CD8-positive, alpha-beta T cell (primary cell): ENCODE measurements at regions of chr10 and their contacts with region 1.

Region 1: GRCh38 chr10:96586419-96587263 is at the start of gene TM9SF3:
- DNase-seq: peak; percentile 86 to 97 (median 94)
- ATAC-seq: peak; percentile 83
- H3K4me3 ChIP-seq: peak within 1 kb of the TSS; percentile 94
- H3K4me3 Mint-ChIP-seq: no peak within 1 kb of the TSS
- H3K27ac ChIP-seq: peak within 1 kb of the TSS; percentile 98 to 99
- H3K27ac Mint-ChIP-seq: peak within 1 kb of the TSS; percentile 86
- H3K4me1 ChIP-seq: peaks cover 51% of the 10 kb centered on the region
- H3K4me1 Mint-ChIP-seq: peaks cover 50% of the 10 kb centered on the region
- H3K27me3 ChIP-seq: no peaks in the 10 kb centered on the region
- H3K27me3 Mint-ChIP-seq: no peaks in the 10 kb centered on the region
- CTCF ChIP-seq: no peak
- total RNA-seq, gene TM9SF3: 105 to 106 TPM

Region 2: GRCh38 chr10:95907456-95908253 is 679.0 kb before region 1 on chr10 and contains the start of gene CC2D2B:
- CTCF ChIA-PET with region 1: no interaction called
- POLR2A ChIA-PET with region 1: no interaction called
- intact Hi-C with region 1: loop called in 1 of 2 experiments (anchors 10 kb)
- DNase-seq: peak; percentile 21 to 79 (median 59)
- ATAC-seq: peak; percentile 72
- H3K4me3 ChIP-seq: peak within 1 kb of the TSS; percentile 77 to 82
- H3K4me3 Mint-ChIP-seq: peak within 1 kb of the TSS; percentile 90
- H3K27ac ChIP-seq: peak within 1 kb of the TSS; percentile 61 to 67
- H3K27ac Mint-ChIP-seq: peak within 1 kb of the TSS; percentile 83
- H3K4me1 ChIP-seq: no peaks in the 10 kb centered on the region
- H3K4me1 Mint-ChIP-seq: peaks cover 18% of the 10 kb centered on the region
- H3K27me3 ChIP-seq: no peaks in the 10 kb centered on the region
- H3K27me3 Mint-ChIP-seq: no peaks in the 10 kb centered on the region
- CTCF ChIP-seq: no peak
- total RNA-seq, gene CC2D2B: not detected

Region 3: GRCh38 chr10:96129387-96130325 is 457.0 kb before region 1 on chr10 and contains the start of gene ZNF518A:
- CTCF ChIA-PET with region 1: no interaction called
- POLR2A ChIA-PET with region 1: interaction called, 6 read pairs
- intact Hi-C with region 1: loop called in 1 of 2 experiments (anchors 5 kb)
- DNase-seq: peak; percentile 80 to 97 (median 88)
- ATAC-seq: peak; percentile 82
- H3K4me3 ChIP-seq: peak within 1 kb of the TSS; percentile 92 to 93
- H3K4me3 Mint-ChIP-seq: peak within 1 kb of the TSS; percentile 96
- H3K27ac ChIP-seq: peak within 1 kb of the TSS; percentile 98 to 99
- H3K27ac Mint-ChIP-seq: peak within 1 kb of the TSS; percentile 99
- H3K4me1 ChIP-seq: peaks cover 19% of the 10 kb centered on the region
- H3K4me1 Mint-ChIP-seq: peaks cover 25% of the 10 kb centered on the region
- H3K27me3 ChIP-seq: peaks cover 2 to 7% of the 10 kb centered on the region in 2 experiments
- H3K27me3 Mint-ChIP-seq: peaks cover 37% of the 10 kb centered on the region
- CTCF ChIP-seq: no peak
- total RNA-seq, gene ZNF518A: 8.7 to 9.3 TPM

Region 4: DNA sequence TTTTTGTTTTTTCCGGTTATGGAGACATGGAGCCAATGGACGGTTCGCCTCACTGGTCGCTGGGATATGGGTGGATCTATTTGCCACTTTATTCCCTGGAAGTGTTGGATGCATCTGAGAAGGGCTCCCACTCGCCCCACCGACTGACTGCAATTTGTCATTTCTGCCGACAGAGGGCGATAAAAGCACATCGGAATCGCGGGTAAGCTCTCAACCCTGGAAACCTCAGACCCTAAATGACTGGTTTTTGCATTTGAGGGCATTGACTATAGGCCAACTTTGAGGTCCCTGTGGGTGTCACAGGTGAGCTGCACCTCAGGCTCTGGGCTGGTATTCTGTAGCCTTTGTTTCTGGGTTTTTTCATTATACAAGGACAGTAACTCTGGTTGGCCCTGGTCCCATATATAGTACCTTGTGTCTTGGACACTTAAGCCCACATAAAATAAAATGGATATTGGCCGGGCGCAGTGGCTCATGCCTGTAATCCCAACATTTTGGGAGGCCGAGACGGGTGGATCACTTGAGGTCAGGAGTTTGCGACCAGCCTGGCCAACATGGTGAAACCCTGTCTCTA is 216.0 kb before region 1 on chr10:
- CTCF ChIA-PET with region 1: no interaction called
- POLR2A ChIA-PET with region 1: no interaction called
- intact Hi-C with region 1: no loop called
- DNase-seq: peak; percentile 10 to 67 (median 50)
- ATAC-seq: peak; percentile 46
- H3K4me3 ChIP-seq: no peak overlapping the region
- H3K4me3 Mint-ChIP-seq: no peak overlapping the region
- H3K27ac ChIP-seq: no peak overlapping the region
- H3K27ac Mint-ChIP-seq: no peak overlapping the region
- H3K4me1 ChIP-seq: no peaks in the 10 kb centered on the region
- H3K4me1 Mint-ChIP-seq: peaks cover 11% of the 10 kb centered on the region
- H3K27me3 ChIP-seq: no peaks in the 10 kb centered on the region
- H3K27me3 Mint-ChIP-seq: no peaks in the 10 kb centered on the region
- CTCF ChIP-seq: peak; percentile 81

Region 5: GRCh38 chr10:96565774-96566173 is 20.9 kb before region 1 on chr10:
- CTCF ChIA-PET with region 1: no interaction called
- POLR2A ChIA-PET with region 1: no interaction called
- intact Hi-C with region 1: loop called in 1 of 2 experiments (anchors 2 kb)
- DNase-seq: no peak
- ATAC-seq: no peak
- H3K4me3 ChIP-seq: no peak overlapping the region
- H3K4me3 Mint-ChIP-seq: no peak overlapping the region
- H3K27ac ChIP-seq: no peak overlapping the region
- H3K27ac Mint-ChIP-seq: no peak overlapping the region
- H3K4me1 ChIP-seq: no peaks in the 10 kb centered on the region
- H3K4me1 Mint-ChIP-seq: peaks cover 43% of the 10 kb centered on the region
- H3K27me3 ChIP-seq: no peaks in the 10 kb centered on the region
- H3K27me3 Mint-ChIP-seq: no peaks in the 10 kb centered on the region
- CTCF ChIP-seq: no peak

Region 6: DNA sequence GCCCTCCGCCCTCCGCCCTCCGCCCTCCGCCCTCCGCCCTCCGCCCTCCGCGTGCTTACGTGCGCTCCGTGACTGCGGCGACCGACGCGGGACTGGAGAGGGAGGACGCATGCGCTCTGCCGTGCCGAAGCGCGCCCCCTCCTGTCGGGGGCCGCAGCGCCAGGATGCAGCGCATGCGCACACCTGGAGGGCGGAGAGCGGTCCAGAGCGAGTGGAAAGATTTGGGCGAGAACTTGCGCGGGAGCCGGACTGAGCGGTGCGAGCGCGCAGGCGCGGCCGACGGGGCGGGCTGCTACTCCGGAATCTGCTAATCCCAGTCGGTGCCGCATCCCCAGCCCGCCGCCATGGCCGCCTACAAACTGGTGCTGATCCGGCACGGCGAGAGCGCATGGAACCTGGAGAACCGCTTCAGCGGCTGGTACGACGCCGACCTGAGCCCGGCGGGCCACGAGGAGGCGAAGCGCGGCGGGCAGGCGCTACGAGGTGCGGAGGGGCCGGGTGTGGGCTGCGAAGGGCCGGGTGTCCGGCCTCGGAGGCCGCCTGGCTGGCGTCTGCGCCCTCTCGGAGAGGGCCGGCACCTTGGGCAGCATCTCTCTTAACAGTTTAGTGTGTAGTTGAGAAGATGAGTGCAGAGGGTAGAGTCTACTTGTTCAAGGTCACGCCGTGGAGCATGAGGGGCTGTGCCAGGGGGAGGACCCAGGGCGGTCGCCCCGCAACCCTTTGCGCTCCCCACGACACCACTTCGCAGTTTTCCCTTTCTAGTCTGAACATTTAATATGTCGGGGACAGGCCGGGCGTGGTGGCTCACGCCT is 839.5 kb after region 1 on chr10 and contains the start of gene PGAM1:
- CTCF ChIA-PET with region 1: no interaction called
- POLR2A ChIA-PET with region 1: no interaction called
- intact Hi-C with region 1: loop called in 1 of 2 experiments (anchors 10 kb)
- DNase-seq: peak; percentile 91 to 99 (median 93)
- ATAC-seq: peak; percentile 81
- H3K4me3 ChIP-seq: peak within 1 kb of the TSS; percentile 84
- H3K4me3 Mint-ChIP-seq: peak within 1 kb of the TSS; percentile 90
- H3K27ac ChIP-seq: peak within 1 kb of the TSS; percentile 85 to 86
- H3K27ac Mint-ChIP-seq: peak within 1 kb of the TSS; percentile 92
- H3K4me1 ChIP-seq: peaks cover 24% of the 10 kb centered on the region
- H3K4me1 Mint-ChIP-seq: peaks cover 44% of the 10 kb centered on the region
- H3K27me3 ChIP-seq: no peaks in the 10 kb centered on the region
- H3K27me3 Mint-ChIP-seq: no peaks in the 10 kb centered on the region
- CTCF ChIP-seq: peak; percentile 47
- total RNA-seq, gene PGAM1: 56.7 to 56.8 TPM